Activated naive CD4-positive, alpha-beta T cell treated with anti-CD3 and anti-CD28 coated beads for 36 hours (primary cell): ENCODE measurements at regions of chr5 and their contacts with region 1.

Region 1: DNA sequence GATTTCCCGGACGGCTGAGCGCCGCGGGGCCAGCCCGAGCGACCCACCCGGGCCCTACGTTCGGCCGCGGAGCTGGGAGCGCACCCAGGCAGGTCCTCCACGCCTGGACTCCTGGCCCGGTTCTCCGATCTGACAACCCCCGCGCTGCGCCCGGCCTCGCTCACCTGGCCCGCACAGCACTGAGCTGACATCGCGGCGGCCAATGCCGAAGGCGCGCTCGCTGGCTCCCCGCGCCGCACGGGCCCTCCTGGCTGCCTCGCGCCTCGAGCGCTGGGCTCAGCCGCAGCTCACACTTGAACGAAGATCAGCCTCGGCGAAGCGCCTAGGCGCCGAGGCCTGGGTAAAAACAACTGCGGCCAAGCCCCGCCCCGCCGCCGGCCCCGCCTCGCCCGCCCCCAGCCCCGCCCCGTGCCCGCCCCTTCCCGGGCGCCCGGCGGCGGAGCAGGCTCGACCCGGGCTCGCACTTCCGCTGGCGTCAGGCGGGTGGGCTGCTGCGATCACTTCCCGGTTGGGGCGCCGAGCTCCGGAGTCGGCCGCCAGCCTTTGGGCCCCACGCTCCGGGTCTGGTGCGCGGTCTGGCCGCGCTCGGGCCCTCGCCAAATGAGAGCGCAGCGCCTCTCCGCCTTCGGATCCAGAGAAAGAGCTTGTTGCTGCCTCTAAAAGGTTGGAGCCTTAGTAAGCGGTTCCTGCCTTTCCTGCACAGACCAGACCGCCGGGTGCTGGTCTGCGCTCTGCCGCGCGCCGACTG is at the start of gene SERINC5:
- DNase-seq: peak; percentile 86
- H3K4me3 Mint-ChIP-seq: peak within 1 kb of the TSS; percentile 97
- H3K27ac Mint-ChIP-seq: peak within 1 kb of the TSS; percentile 98
- H3K4me1 Mint-ChIP-seq: peaks cover 43% of the 10 kb centered on the region
- H3K27me3 Mint-ChIP-seq: no peaks in the 10 kb centered on the region
- total RNA-seq, gene SERINC5: 34.8 to 36.4 TPM

Region 2: GRCh38 chr5:80125962-80126480 is 129.9 kb before region 1 on chr5:
- CTCF ChIA-PET with region 1: interaction called, 4 read pairs
- intact Hi-C with region 1: loop called (anchors 1 kb)
- DNase-seq: peak; percentile 44
- H3K4me3 Mint-ChIP-seq: no peak overlapping the region
- H3K27ac Mint-ChIP-seq: peak overlapping the region; percentile 43
- H3K4me1 Mint-ChIP-seq: peaks cover 47% of the 10 kb centered on the region
- H3K27me3 Mint-ChIP-seq: no peaks in the 10 kb centered on the region

Region 3: DNA sequence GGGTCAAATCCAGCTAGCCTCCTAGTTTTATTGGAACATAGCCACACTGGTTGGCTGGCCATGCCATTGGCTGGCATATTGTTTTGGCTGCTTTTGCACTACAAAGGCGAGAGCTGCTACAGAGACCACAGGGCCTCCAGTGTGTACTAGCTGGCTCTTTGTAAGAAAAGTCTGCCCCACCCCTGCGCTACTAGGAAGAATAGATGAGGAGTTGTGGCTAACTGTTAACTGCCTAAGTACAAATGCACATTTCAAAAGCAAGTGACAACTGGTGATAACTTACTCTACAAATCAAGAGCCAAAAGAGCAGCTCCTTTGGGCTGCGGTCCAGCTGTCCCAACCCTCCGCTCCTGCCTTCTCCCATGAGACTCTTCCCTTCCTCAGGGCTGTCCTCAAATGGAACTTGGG is 63.9 kb before region 1 on chr5:
- CTCF ChIA-PET with region 1: interaction called, 3 read pairs
- intact Hi-C with region 1: loop called (anchors 2 kb)
- DNase-seq: peak; percentile 59
- H3K4me3 Mint-ChIP-seq: peak overlapping the region; percentile 69
- H3K27ac Mint-ChIP-seq: peak overlapping the region; percentile 97
- H3K4me1 Mint-ChIP-seq: peaks cover 80% of the 10 kb centered on the region
- H3K27me3 Mint-ChIP-seq: no peaks in the 10 kb centered on the region

Region 4: GRCh38 chr5:80216753-80217596 is 38.9 kb before region 1 on chr5:
- CTCF ChIA-PET with region 1: interaction called, 9 read pairs
- intact Hi-C with region 1: loop called (anchors 1 kb)
- DNase-seq: peak; percentile 66
- H3K4me3 Mint-ChIP-seq: peak overlapping the region; percentile 79
- H3K27ac Mint-ChIP-seq: peak overlapping the region; percentile 90
- H3K4me1 Mint-ChIP-seq: peaks cover 87% of the 10 kb centered on the region
- H3K27me3 Mint-ChIP-seq: no peaks in the 10 kb centered on the region

Region 5: GRCh38 chr5:80268916-80269315 is 13.0 kb after region 1 on chr5:
- CTCF ChIA-PET with region 1: interaction called, 4 read pairs
- intact Hi-C with region 1: loop called (anchors 1 kb)
- DNase-seq: no peak
- H3K4me3 Mint-ChIP-seq: peak overlapping the region; percentile 50
- H3K27ac Mint-ChIP-seq: peak overlapping the region; percentile 68
- H3K4me1 Mint-ChIP-seq: peaks cover 46% of the 10 kb centered on the region
- H3K27me3 Mint-ChIP-seq: no peaks in the 10 kb centered on the region